Naive thymus-derived CD4-positive, alpha-beta T cell (primary cell): ENCODE measurements at regions of chr17 and their contacts with region 1.

Region 1: DNA sequence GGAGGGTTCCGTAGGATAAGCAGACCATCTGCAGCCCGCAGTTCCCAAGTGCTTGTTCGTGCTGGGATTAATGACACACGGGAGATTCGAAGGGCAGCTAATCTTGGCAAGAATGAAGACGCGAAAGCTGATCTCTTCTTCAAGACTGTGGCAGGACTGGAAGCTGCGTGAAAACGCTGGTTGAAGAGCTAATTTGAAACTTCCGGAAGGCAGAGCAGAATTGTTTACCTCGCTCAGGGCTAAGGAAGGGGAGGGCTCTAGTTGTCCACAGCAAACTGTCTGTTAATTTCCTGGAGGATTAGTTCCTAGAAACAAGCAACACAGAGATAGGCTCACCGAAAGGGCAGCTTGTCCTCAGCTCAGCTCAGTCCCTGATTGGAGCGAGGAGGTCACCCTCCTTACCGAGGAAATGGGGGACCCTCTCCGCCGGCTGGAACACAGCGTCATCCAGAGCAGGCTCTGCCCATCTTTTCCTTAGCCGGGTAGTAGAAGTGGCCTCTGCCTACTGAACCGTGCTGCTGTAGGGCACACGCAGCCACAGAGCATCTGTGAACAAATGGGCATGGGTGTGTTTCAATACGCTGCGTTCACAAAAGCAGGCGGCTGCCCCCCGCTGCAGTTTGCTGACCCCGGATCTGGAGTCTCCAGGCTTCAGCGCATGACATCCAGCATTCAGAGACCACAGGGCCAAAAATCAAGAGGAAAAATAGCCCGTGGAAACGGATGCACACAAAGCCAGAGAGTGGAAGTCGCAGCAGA is 16.7 kb upstream of the BAIAP2 start:
- DNase-seq: peak in 7 of 9 donors; percentile 47 to 62 (median 55)
- ATAC-seq: peak; percentile 84
- H3K4me3 ChIP-seq: peak overlapping the region; percentile 74
- H3K4me3 Mint-ChIP-seq: peak overlapping the region; percentile 80 to 91 (median 88)
- H3K27ac ChIP-seq: peak overlapping the region; percentile 80
- H3K27ac Mint-ChIP-seq: peak overlapping the region; percentile 92 to 99 (median 95)
- H3K4me1 ChIP-seq: peaks cover 10 to 16% of the 10 kb centered on the region in 2 donors
- H3K4me1 Mint-ChIP-seq: peaks cover 20 to 49% (median 42%) of the 10 kb centered on the region in 7 donors
- H3K27me3 ChIP-seq: no peaks in the 10 kb centered on the region
- H3K27me3 Mint-ChIP-seq: no peaks in the 10 kb centered on the region

Region 2: GRCh38 chr17:80991645-80992076 is 26.6 kb before region 1 on chr17 and contains the start of gene CHMP6:
- CTCF ChIA-PET with region 1: interaction called, 6 read pairs
- POLR2A ChIA-PET with region 1: interaction called, 20 read pairs
- intact Hi-C with region 1: loop called in 1 of 2 experiments (anchors 2 kb)
- DNase-seq: peak; percentile 60 to 84 (median 78)
- ATAC-seq: peak; percentile 89
- H3K4me3 ChIP-seq: peak within 1 kb of the TSS; percentile 94
- H3K4me3 Mint-ChIP-seq: peak within 1 kb of the TSS; percentile 71 to 88 (median 83)
- H3K27ac ChIP-seq: peak within 1 kb of the TSS; percentile 96
- H3K27ac Mint-ChIP-seq: peak within 1 kb of the TSS; percentile 78 to 90 (median 84)
- H3K4me1 ChIP-seq: peaks cover 14 to 25% of the 10 kb centered on the region in 2 donors
- H3K4me1 Mint-ChIP-seq: peaks cover 7 to 38% (median 21%) of the 10 kb centered on the region in 7 donors
- H3K27me3 ChIP-seq: no peaks in the 10 kb centered on the region
- H3K27me3 Mint-ChIP-seq: peaks cover 0 to 11% (median 0%) of the 10 kb centered on the region in 5 donors
- total RNA-seq, gene CHMP6: 26.4 to 49.9 (median 41.7) TPM

Region 3: GRCh38 chr17:81003711-81004475 is 14.3 kb before region 1 on chr17:
- CTCF ChIA-PET with region 1: interaction called, 3 read pairs
- POLR2A ChIA-PET with region 1: interaction called, 8 read pairs
- intact Hi-C with region 1: loop called (anchors 1 kb)
- DNase-seq: no peak
- ATAC-seq: peak; percentile 43
- H3K4me3 ChIP-seq: no peak overlapping the region
- H3K4me3 Mint-ChIP-seq: peak overlapping the region in 9 of 10 donors; percentile 68 to 90 (median 73)
- H3K27ac ChIP-seq: no peak overlapping the region
- H3K27ac Mint-ChIP-seq: peak overlapping the region in 3 of 9 donors; percentile 17 to 32 (median 31)
- H3K4me1 ChIP-seq: peaks cover 3 to 13% of the 10 kb centered on the region in 2 donors
- H3K4me1 Mint-ChIP-seq: peaks cover 5 to 22% (median 18%) of the 10 kb centered on the region in 7 donors
- H3K27me3 ChIP-seq: peaks cover 3 to 4% of the 10 kb centered on the region in 2 donors
- H3K27me3 Mint-ChIP-seq: peaks cover 13 to 56% (median 22%) of the 10 kb centered on the region in 5 donors